ENCODE measurements at regions of chr3 and their contacts with region 1.

Region 1: DNA sequence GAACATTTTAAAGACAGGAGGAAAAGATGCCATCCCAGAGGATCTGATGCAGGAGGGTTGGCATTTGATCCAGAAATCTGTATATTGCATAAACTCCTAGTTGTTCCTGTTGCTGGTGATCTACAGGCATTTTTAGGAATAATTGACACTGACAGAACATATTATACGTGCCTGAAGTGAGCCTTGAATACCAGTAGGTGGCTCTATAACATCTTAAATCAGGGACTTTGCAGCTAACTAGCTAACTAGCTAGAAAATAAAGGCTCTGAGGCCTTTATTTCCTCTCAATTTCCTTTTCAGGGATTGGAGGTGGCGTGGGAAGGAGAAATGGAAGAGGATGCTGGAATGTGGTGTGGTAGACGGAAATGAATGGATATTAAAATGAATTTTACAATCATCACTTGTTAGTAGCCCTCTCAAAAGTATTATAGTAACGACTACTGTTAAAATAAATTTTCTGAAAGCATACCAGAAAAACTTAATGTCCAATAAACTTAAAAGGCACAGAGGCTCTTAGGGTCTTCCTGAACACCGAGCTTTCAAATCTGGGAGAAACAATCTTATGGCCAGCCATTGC is 73.9 kb upstream of the ZBED2 start:
- DNase-seq: peak; percentile 64
- ATAC-seq: peak; percentile 52
- H3K4me3 ChIP-seq: no peak overlapping the region
- H3K4me3 Mint-ChIP-seq: no peak overlapping the region
- H3K27ac ChIP-seq: no peak overlapping the region
- H3K27ac Mint-ChIP-seq: peak overlapping the region; percentile 57
- H3K4me1 ChIP-seq: peaks cover 29 to 34% of the 10 kb centered on the region in 2 donors
- H3K4me1 Mint-ChIP-seq: peaks cover 32% of the 10 kb centered on the region
- H3K27me3 ChIP-seq: no peaks in the 10 kb centered on the region
- H3K27me3 Mint-ChIP-seq: no peaks in the 10 kb centered on the region
- CTCF ChIP-seq: peak; percentile 91

Region 2: DNA sequence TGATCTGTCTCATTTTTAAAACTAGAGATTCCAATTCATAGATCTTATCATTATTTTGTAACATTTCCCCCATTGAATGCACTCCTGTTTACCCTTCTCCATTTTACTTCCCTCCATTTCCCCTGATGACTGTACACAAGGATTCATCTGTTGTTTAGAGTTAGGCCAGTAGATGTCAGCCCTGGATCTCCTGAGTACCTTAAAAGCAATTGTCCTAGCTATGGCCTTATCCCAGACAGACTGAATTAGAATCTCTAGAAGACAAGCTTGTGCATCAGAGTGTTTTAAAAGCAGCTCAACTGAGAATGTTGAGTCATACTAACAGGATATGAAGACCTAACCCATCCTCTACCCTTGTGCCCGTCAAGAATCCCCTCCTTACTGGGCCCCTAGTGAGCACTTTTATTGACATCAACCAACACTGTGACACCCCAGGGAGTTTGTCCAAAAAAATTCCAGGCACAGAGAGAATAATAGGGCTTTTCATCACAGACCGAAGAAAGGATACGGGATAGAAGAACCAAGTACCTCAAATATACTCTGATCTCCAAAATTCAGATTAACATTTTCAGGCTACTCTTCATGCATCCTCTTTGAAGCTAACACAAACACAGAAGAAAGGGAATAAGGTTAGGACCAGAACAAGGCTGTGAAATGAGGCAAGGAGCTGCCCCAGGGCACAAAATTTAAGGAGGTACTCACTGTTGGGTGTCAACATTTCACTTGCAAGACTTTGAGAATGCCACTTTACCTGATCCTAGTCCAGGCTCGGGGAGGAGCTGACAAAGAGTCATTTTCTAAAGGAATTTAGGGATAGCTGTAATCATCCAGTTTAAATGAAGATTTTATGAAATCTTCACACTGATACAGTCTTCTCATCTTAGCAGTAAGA is 91.0 kb before region 1 on chr3:
- CTCF ChIA-PET with region 1: interaction called, 45 read pairs
- POLR2A ChIA-PET with region 1: no interaction called
- intact Hi-C with region 1: loop called (anchors 1 kb)
- DNase-seq: peak; percentile 47
- ATAC-seq: peak; percentile 86
- H3K4me3 ChIP-seq: no peak overlapping the region
- H3K4me3 Mint-ChIP-seq: no peak overlapping the region
- H3K27ac ChIP-seq: no peak overlapping the region
- H3K27ac Mint-ChIP-seq: peak overlapping the region; percentile 59
- H3K4me1 ChIP-seq: peaks cover 9 to 18% of the 10 kb centered on the region in 2 donors
- H3K4me1 Mint-ChIP-seq: peaks cover 31% of the 10 kb centered on the region
- H3K27me3 ChIP-seq: no peaks in the 10 kb centered on the region
- H3K27me3 Mint-ChIP-seq: no peaks in the 10 kb centered on the region
- CTCF ChIP-seq: peak; percentile 55

Region 3: GRCh38 chr3:111616417-111617105 is 52.4 kb before region 1 on chr3:
- CTCF ChIA-PET with region 1: interaction called, 15 read pairs
- POLR2A ChIA-PET with region 1: interaction called, 3 read pairs
- intact Hi-C with region 1: loop called (anchors 5 kb)
- DNase-seq: peak; percentile 49
- ATAC-seq: peak; percentile 82
- H3K4me3 ChIP-seq: no peak overlapping the region
- H3K4me3 Mint-ChIP-seq: peak overlapping the region; percentile 59
- H3K27ac ChIP-seq: peak overlapping the region; percentile 2 to 39
- H3K27ac Mint-ChIP-seq: peak overlapping the region; percentile 87
- H3K4me1 ChIP-seq: peaks cover 16 to 21% of the 10 kb centered on the region in 2 donors
- H3K4me1 Mint-ChIP-seq: peaks cover 21% of the 10 kb centered on the region
- H3K27me3 ChIP-seq: no peaks in the 10 kb centered on the region
- H3K27me3 Mint-ChIP-seq: no peaks in the 10 kb centered on the region
- CTCF ChIP-seq: peak; percentile 8

Region 4: DNA sequence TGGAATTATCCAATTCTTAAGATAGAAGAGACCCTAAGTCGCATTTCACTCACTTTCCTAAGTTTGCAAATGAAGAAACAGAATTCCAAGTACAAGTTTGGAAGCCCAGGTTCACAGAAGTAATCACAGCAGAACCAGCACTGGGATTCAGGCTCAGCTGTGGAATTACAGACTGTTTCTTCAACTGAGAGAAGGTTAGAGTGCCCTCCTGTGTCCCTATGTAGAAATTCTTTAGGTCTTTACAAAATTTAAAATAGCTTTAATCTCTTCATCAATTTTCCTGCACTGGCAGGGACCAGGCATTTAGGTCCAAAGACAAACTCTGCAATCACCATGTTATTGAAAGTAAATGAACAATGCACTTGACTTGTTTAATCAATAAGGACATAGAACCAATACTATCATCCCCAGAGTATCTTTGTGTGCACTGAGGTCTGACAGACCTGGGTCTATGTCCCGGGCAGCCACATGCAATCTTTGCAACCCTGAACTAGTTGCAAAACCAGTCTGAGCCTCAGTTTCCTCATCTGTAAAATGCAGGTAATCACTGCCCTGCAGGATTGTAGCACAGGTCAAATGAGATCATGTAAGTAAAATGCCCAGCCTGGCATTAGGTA is 22.4 kb after region 1 on chr3:
- CTCF ChIA-PET with region 1: interaction called, 8 read pairs
- POLR2A ChIA-PET with region 1: no interaction called
- intact Hi-C with region 1: loop called (anchors 1 kb)
- DNase-seq: peak; percentile 56
- ATAC-seq: peak; percentile 49
- H3K4me3 ChIP-seq: no peak overlapping the region
- H3K4me3 Mint-ChIP-seq: no peak overlapping the region
- H3K27ac ChIP-seq: no peak overlapping the region
- H3K27ac Mint-ChIP-seq: no peak overlapping the region
- H3K4me1 ChIP-seq: peaks cover 2 to 19% of the 10 kb centered on the region in 2 donors
- H3K4me1 Mint-ChIP-seq: peaks cover 22% of the 10 kb centered on the region
- H3K27me3 ChIP-seq: no peaks in the 10 kb centered on the region
- H3K27me3 Mint-ChIP-seq: no peaks in the 10 kb centered on the region
- CTCF ChIP-seq: peak; percentile 62

Region 5: GRCh38 chr3:111717601-111718000 is 48.6 kb after region 1 on chr3:
- CTCF ChIA-PET with region 1: interaction called, 150 read pairs
- POLR2A ChIA-PET with region 1: no interaction called
- intact Hi-C with region 1: loop called (anchors 1 kb)
- DNase-seq: peak; percentile 80
- ATAC-seq: peak; percentile 93
- H3K4me3 ChIP-seq: no peak overlapping the region
- H3K4me3 Mint-ChIP-seq: no peak overlapping the region
- H3K27ac ChIP-seq: no peak overlapping the region
- H3K27ac Mint-ChIP-seq: no peak overlapping the region
- H3K4me1 ChIP-seq: no peaks in the 10 kb centered on the region
- H3K4me1 Mint-ChIP-seq: peaks cover under 1% of the 10 kb centered on the region
- H3K27me3 ChIP-seq: no peaks in the 10 kb centered on the region
- H3K27me3 Mint-ChIP-seq: no peaks in the 10 kb centered on the region
- CTCF ChIP-seq: peak; percentile 95

Region 6: GRCh38 chr3:111967651-111968274 is 298.8 kb after region 1 on chr3:
- CTCF ChIA-PET with region 1: no interaction called
- POLR2A ChIA-PET with region 1: interaction called, 11 read pairs
- intact Hi-C with region 1: loop called (anchors 1 kb)
- DNase-seq: peak; percentile 83
- ATAC-seq: peak; percentile 96
- H3K4me3 ChIP-seq: no peak overlapping the region
- H3K4me3 Mint-ChIP-seq: no peak overlapping the region
- H3K27ac ChIP-seq: no peak overlapping the region
- H3K27ac Mint-ChIP-seq: no peak overlapping the region
- H3K4me1 ChIP-seq: peaks cover 2 to 8% of the 10 kb centered on the region in 2 donors
- H3K4me1 Mint-ChIP-seq: peaks cover 4% of the 10 kb centered on the region
- H3K27me3 ChIP-seq: no peaks in the 10 kb centered on the region
- H3K27me3 Mint-ChIP-seq: no peaks in the 10 kb centered on the region
- CTCF ChIP-seq: peak; percentile 96

Region 7: DNA sequence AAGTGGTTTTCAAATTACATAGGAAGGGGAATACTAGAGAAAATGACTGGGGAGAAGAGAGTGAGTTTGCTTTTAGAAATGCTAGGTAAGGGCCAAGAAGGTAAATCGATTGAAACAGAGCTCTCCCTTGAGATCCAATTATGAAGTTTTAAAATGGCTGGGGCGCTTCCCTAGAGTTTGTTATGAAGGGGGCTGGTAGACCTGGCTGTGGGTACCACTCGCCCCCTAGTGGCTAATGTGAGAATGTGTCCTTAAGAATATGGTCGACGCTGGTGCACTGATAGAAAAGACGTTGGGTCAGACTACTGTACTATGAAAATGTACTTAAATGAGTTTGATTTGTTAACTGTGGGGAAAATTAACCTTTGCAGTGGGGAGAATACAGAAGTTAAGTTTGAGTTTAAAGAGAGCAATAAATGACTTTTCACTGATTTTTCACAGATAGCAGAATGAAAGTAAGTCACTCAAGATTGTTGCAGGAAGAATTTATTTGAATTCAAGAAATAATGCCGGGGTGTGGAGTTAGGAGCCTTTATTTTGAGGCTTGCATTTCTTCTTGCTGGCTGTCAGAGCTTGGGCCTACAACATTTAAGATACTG is 374.7 kb after region 1 on chr3:
- CTCF ChIA-PET with region 1: interaction called, 7 read pairs
- POLR2A ChIA-PET with region 1: no interaction called
- intact Hi-C with region 1: loop called (anchors 2 kb)
- DNase-seq: peak; percentile 76
- ATAC-seq: peak; percentile 92
- H3K4me3 ChIP-seq: no peak overlapping the region
- H3K4me3 Mint-ChIP-seq: no peak overlapping the region
- H3K27ac ChIP-seq: no peak overlapping the region
- H3K27ac Mint-ChIP-seq: no peak overlapping the region
- H3K4me1 ChIP-seq: peaks cover 7 to 8% of the 10 kb centered on the region in 2 donors
- H3K4me1 Mint-ChIP-seq: peaks cover 4% of the 10 kb centered on the region
- H3K27me3 ChIP-seq: no peaks in the 10 kb centered on the region
- H3K27me3 Mint-ChIP-seq: peaks cover 9% of the 10 kb centered on the region
- CTCF ChIP-seq: peak; percentile 93